K562 (cell line): ENCODE measurements at regions of chr12 and their contacts with region 1.

Region 1: GRCh38 chr12:49130151-49131050 is 794 bp downstream of the TUBA1B start:
- DNase-seq: peak; percentile 79 to 97 (median 87)
- ATAC-seq: peak; percentile 74
- H3K4me3 ChIP-seq: peak overlapping the region; percentile 84
- H3K27ac ChIP-seq: peak overlapping the region; percentile 96
- H3K4me1 ChIP-seq: peaks cover 17 to 27% of the 10 kb centered on the region in 2 experiments; a peak in 4 of 5 replicates
- H3K27me3 ChIP-seq: no peaks in the 10 kb centered on the region
- CTCF ChIP-seq: peak; percentile 89 to 96 (median 89)
- EP300 ChIP-seq: peak; percentile 62; the same call in 1 of the 2 replicates
- POLR2A ChIP-seq: no peak
- RAD21 ChIP-seq: peak; percentile 66 to 72

Region 2: DNA sequence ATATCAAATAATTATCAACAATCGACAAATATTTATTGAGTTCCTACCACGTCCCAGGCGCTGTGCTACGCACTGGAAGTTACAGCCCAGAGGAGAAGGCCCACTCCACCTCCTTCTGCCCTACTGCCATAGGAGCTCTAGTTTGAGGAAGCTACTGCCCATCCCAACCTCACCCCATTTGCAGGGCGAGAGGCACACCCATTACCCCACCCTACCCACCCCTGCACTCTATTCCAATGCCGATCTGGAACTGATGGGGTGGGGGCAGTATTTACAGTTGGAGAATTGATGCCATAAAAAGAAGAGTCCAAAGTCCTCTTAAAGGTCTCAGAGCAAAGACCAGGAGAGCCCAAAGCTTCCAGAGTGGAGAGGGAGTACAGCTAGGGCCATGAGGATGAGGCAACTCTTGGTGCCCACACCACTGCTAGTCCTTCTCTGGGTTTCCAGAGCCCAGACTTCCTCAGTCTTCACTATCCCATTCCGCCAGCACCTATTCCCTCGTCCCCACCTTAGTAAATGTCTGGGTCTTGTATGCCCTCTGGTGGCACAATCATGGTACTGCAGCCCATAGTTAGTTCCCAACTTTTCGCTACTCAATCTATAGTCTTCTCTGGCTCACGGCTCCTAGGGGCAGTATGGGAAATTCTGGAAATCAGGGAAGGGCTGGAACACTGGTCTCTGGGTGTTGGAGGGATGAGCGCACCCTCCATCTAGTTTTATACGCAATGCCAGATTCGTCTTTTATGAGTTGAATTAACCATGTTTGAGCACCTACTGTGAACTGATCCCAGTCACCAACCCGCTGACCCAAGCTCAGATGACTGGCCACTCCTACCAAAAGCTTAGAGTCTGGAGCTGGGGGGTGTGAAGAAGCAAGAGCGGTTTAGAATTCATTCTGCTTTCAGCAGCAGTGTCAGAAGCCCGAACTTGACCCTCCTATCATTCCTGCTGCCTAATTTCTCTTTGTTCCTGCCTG is 334.6 kb before region 1 on chr12:
- CTCF ChIA-PET with region 1: no interaction called
- POLR2A ChIA-PET with region 1: no interaction called
- in situ Hi-C with region 1: no loop called
- intact Hi-C with region 1: no loop called
- DNase-seq: peak; percentile 77 to 84 (median 78)
- ATAC-seq: peak; percentile 93
- H3K4me3 ChIP-seq: no peak overlapping the region
- H3K27ac ChIP-seq: no peak overlapping the region
- H3K4me1 ChIP-seq: peaks cover 2 to 7% of the 10 kb centered on the region in 2 experiments; a peak in 2 of 5 replicates
- H3K27me3 ChIP-seq: peaks cover 5 to 14% of the 10 kb centered on the region in 2 experiments; a peak in 4 of 5 replicates
- CTCF ChIP-seq: peak; percentile 88 to 95 (median 94)
- EP300 ChIP-seq: no peak
- POLR2A ChIP-seq: no peak
- RAD21 ChIP-seq: peak; percentile 96 to 97

Region 3: GRCh38 chr12:49018261-49019119 is 111.9 kb before region 1 on chr12 and contains the start of gene PRKAG1:
- CTCF ChIA-PET with region 1: no interaction called
- POLR2A ChIA-PET with region 1: interaction called, 10 read pairs
- in situ Hi-C with region 1: no loop called
- intact Hi-C with region 1: no loop called
- DNase-seq: peak; percentile 96 to 99 (median 97)
- ATAC-seq: peak; percentile 89
- H3K4me3 ChIP-seq: peak within 1 kb of the TSS; percentile 69
- H3K27ac ChIP-seq: peak within 1 kb of the TSS; percentile 99
- H3K4me1 ChIP-seq: peaks cover 40 to 49% of the 10 kb centered on the region in 2 experiments
- H3K27me3 ChIP-seq: no peaks in the 10 kb centered on the region
- CTCF ChIP-seq: peak; percentile 76 to 85 (median 79)
- EP300 ChIP-seq: peak; percentile 68
- POLR2A ChIP-seq: peak; percentile 93
- RAD21 ChIP-seq: peak; percentile 26 to 27; a peak in 3 of 4 replicates
- polyA plus RNA-seq, gene PRKAG1: 82.7 to 126 TPM

Region 4: DNA sequence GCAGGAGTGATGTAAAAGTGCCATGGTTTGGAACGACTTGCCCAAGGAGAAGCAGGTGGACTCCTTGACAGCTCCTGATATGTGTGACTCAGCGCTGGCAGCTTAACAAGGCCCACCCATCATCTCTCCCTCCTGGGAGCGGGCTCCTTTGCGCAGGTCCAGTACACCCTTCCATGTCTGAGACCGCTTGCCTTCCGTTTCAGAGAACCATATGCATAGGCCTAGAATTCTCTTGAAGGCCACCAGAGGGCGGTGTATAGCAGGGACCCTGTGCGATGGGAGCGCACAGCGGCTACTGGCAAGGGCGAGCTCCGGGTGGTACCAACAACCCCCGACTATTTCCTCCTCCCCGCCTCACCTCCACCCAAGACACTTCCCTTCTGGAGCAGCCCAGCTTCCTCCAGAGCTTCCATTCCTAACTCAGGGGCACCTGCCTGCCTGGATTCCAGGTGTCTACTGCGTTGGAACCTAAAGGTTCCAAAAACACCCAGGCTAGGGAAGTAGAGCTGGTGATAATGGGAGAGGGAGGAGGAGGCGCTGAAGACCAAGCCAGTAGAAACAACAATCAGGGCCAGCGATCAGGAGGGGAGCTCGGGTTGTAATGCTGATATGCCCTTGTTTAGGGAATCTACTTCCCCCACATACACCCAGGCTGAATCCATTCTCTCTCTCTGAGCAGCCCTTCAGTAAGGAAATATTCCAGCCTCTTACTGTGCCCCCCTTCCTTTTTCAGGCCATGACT is 42.0 kb before region 1 on chr12:
- CTCF ChIA-PET with region 1: no interaction called
- POLR2A ChIA-PET with region 1: interaction called, 62 read pairs
- in situ Hi-C with region 1: no loop called
- intact Hi-C with region 1: loop called (anchors 2 kb)
- DNase-seq: peak; percentile 82 to 97 (median 87)
- ATAC-seq: peak; percentile 83
- H3K4me3 ChIP-seq: peak overlapping the region; percentile 22; the same call in 1 of the 2 replicates
- H3K27ac ChIP-seq: peak overlapping the region; percentile 40; the same call in 2 of the 3 replicates
- H3K4me1 ChIP-seq: peaks cover 49 to 57% of the 10 kb centered on the region in 2 experiments
- H3K27me3 ChIP-seq: no peaks in the 10 kb centered on the region
- CTCF ChIP-seq: peak; percentile 93 to 98 (median 96)
- EP300 ChIP-seq: peak; percentile 39; the same call in 1 of the 2 replicates
- POLR2A ChIP-seq: no peak; the same call in 1 of the 2 replicates
- RAD21 ChIP-seq: peak; percentile 85 to 88

Region 5: DNA sequence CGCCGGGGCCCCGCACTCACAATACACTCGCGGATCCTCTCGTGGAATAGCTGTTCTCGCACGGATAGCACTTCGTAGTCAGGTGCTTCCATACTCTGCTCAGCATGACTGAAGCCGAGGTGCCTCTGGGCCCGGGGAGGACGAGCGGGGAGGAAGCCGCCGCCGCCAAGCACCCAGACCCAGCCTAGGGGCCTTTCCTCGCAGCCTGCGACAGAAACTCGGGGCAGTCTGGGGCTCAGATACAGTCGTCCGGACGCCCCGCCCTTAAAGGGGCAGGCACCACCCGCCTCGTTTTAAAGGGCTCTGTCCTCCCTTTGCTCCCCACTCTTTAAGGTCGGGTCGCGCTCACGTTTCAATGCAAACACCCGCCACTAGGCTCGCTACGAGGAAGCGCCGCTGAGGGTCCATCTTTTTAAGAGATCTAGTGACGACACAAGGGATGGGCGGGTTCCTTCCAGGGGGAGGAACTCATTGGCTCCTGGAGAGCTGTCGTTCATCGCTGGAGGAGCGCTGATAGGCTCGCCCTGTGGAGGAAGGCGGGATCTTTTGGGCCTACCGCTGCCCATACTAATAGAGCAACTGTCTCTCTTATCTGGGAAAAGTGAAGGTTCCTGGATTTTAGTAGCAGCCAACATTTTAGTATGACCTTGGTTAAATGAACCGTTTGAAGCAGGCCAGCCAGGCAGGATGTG is 19.8 kb before region 1 on chr12 and contains the start of gene LMBR1L:
- CTCF ChIA-PET with region 1: no interaction called
- POLR2A ChIA-PET with region 1: interaction called, 112 read pairs
- in situ Hi-C with region 1: no loop called
- intact Hi-C with region 1: loop called (anchors 2 kb)
- DNase-seq: peak; percentile 99 to 100 (median 99)
- ATAC-seq: peak; percentile 97
- H3K4me3 ChIP-seq: peak within 1 kb of the TSS; percentile 81
- H3K27ac ChIP-seq: peak within 1 kb of the TSS; percentile 84
- H3K4me1 ChIP-seq: peaks cover 15 to 26% of the 10 kb centered on the region in 2 experiments; a peak in 4 of 5 replicates
- H3K27me3 ChIP-seq: no peaks in the 10 kb centered on the region
- CTCF ChIP-seq: peak; percentile 55 to 60 (median 56); a peak in 5 of 6 replicates
- EP300 ChIP-seq: no peak
- POLR2A ChIP-seq: peak; percentile 79
- RAD21 ChIP-seq: no peak; a peak in 2 of 4 replicates
- polyA plus RNA-seq, gene LMBR1L: 2.5 to 5.3 TPM

Region 6: GRCh38 chr12:49174218-49174617 is 43.8 kb after region 1 on chr12:
- CTCF ChIA-PET with region 1: no interaction called
- POLR2A ChIA-PET with region 1: interaction called, 29 read pairs
- in situ Hi-C with region 1: no loop called
- intact Hi-C with region 1: no loop called
- DNase-seq: peak in 1 of 4 experiments; percentile 64
- ATAC-seq: peak; percentile 88
- H3K4me3 ChIP-seq: no peak overlapping the region
- H3K27ac ChIP-seq: no peak overlapping the region
- H3K4me1 ChIP-seq: peaks cover 2 to 6% of the 10 kb centered on the region in 2 experiments; a peak in 2 of 5 replicates
- H3K27me3 ChIP-seq: no peaks in the 10 kb centered on the region
- CTCF ChIP-seq: no peak
- EP300 ChIP-seq: no peak
- POLR2A ChIP-seq: no peak
- RAD21 ChIP-seq: no peak

Region 7: DNA sequence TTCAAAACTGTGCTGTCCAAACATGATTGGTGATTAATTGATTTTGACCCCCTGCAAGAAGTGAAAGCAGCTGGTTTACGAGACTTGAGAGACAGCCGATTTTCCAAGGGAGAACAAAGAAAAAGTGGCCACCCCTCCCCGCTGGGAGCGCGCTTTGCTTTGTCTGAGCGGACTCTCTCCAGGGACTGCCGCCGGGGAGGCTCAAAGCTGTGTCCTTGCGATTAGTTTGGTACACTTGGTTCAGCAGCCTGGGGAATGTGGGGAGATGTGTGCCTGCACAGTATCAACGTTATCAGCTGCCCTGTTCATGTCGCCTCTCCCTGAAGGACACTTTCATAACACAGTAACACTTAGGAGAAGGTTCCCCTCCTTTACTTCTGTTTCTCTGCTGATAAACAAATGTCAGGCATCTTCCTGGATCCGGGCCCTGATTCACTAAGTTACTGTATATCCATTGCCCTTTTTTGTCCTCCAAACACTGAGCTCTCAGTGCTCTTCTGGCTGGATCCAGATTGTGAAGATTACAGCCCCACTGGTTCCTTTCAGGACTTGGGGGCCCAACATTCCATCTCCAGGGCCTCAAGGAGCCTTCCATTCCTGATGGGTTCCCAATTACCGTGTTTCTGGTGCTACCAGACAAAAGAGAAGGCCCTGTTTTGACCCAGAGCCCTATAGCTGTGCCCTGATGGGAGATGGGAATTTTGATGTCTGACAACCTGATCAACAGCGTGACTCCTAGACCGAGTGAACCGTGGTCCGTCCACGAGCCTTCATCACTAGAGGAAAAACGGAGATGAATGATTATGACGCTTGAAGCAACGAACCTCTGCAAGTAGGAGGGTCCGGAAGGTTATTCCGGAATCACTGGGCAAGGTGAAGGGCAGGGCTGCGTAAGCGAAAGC is 102.8 kb after region 1 on chr12:
- CTCF ChIA-PET with region 1: interaction called, 11 read pairs
- POLR2A ChIA-PET with region 1: interaction called, 72 read pairs
- in situ Hi-C with region 1: no loop called
- intact Hi-C with region 1: loop called (anchors 1 kb)
- DNase-seq: peak; percentile 85 to 98 (median 89)
- ATAC-seq: peak; percentile 90
- H3K4me3 ChIP-seq: peak overlapping the region; percentile 34
- H3K27ac ChIP-seq: peak overlapping the region; percentile 87
- H3K4me1 ChIP-seq: peaks cover 27 to 40% of the 10 kb centered on the region in 2 experiments
- H3K27me3 ChIP-seq: no peaks in the 10 kb centered on the region
- CTCF ChIP-seq: peak; percentile 45 to 62 (median 57)
- EP300 ChIP-seq: peak; percentile 88
- POLR2A ChIP-seq: no peak
- RAD21 ChIP-seq: peak; percentile 16 to 29; a peak in 2 of 4 replicates